GM10248 (cell line): ENCODE measurements at regions of chr1 and their contacts with region 1.

Region 1: GRCh38 chr1:237386362-237387143 is 344.6 kb downstream of the RYR2 start:
- DNase-seq: peak; percentile 36
- CTCF ChIP-seq: peak; percentile 59

Region 2: DNA sequence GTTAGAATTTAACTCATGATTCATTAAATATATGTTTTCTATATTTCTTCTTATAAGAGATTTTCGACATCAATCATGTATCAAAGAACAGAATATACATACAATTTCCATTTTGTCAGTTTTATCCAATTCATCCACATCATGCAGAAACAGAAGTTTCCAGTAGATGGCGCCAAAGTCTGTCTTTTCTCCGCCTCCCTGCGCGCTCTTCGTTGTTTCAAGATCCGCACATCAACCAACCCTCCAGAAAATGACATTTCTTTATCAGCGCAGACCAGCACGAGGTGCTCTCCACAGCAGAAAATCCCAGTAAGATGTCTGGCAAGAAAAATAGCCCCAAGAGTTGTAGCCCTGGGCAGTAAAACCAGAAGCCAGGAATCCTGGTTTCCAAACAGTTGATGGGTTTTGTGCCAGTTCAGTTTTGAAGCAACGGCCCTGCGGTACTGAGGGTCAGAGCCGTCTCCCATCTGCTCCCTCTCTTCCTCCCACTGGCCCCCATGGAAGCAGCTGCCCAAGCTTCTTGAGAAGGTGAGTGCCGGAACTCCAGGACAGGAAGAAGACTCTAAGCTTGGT is 1282.8 kb before region 1 on chr1:
- CTCF ChIA-PET with region 1: interaction called, 10 read pairs
- POLR2A ChIA-PET with region 1: no interaction called
- DNase-seq: peak; percentile 78
- CTCF ChIP-seq: peak; percentile 70

Region 3: DNA sequence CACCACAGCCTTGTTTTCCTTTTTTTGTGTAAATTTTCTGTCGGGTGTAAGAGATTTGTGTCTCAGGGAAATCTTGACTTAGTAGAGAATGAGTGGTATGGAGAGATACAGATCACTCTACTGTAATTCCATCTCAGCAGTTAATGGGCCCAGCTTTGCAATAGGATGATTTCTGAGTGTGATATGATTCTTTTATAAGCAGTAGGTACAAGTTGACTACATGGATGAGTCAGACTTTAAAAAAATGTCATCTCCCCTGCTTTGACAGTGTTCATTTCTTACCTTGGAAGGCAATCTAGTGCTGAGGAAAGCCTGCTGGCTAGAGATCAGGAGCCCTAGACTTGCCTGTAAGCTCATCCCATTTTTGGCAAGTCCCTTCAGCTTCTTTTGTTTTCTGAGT is 82.6 kb before region 1 on chr1:
- CTCF ChIA-PET with region 1: no interaction called
- POLR2A ChIA-PET with region 1: no interaction called
- DNase-seq: no peak
- CTCF ChIP-seq: no peak

Region 4: GRCh38 chr1:237367758-237368157 is 18.8 kb before region 1 on chr1:
- CTCF ChIA-PET with region 1: interaction called, 10 read pairs
- POLR2A ChIA-PET with region 1: no interaction called
- DNase-seq: no peak
- CTCF ChIP-seq: no peak

Region 5: GRCh38 chr1:237398751-237399150 is 12.2 kb after region 1 on chr1:
- CTCF ChIA-PET with region 1: interaction called, 12 read pairs
- POLR2A ChIA-PET with region 1: no interaction called
- DNase-seq: no peak
- CTCF ChIP-seq: no peak

Region 6: GRCh38 chr1:237470712-237471310 is 84.3 kb after region 1 on chr1:
- CTCF ChIA-PET with region 1: no interaction called
- POLR2A ChIA-PET with region 1: no interaction called
- DNase-seq: no peak
- CTCF ChIP-seq: no peak